GM12878 (cell line): ENCODE measurements at regions of chr11 and their contacts with region 1.

Region 1: GRCh38 chr11:67409261-67409666 is 5.4 kb downstream of the TBC1D10C start:
- DNase-seq: no peak
- ATAC-seq: peak; percentile 77
- H3K4me3 ChIP-seq: peak overlapping the region; percentile 48; the same call in 1 of the 2 replicates
- H3K27ac ChIP-seq: peak overlapping the region; percentile 84
- H3K4me1 ChIP-seq: peaks cover 61% of the 10 kb centered on the region
- H3K27me3 ChIP-seq: no peaks in the 10 kb centered on the region
- CTCF ChIP-seq: no peak
- EP300 ChIP-seq: no peak; a peak in 1 of 4 replicates
- POLR2A ChIP-seq: peak; percentile 83
- RAD21 ChIP-seq: no peak

Region 2: GRCh38 chr11:67337257-67337656 is 72.0 kb before region 1 on chr11:
- CTCF ChIA-PET with region 1: no interaction called
- POLR2A ChIA-PET with region 1: no interaction called
- RAD21 ChIA-PET with region 1: no interaction called
- SMC1A ChIA-PET with region 1: no interaction called
- in situ Hi-C with region 1: no loop called
- intact Hi-C with region 1: no loop called
- DNase-seq: no peak
- ATAC-seq: no peak
- H3K4me3 ChIP-seq: no peak overlapping the region
- H3K27ac ChIP-seq: no peak overlapping the region
- H3K4me1 ChIP-seq: no peaks in the 10 kb centered on the region
- H3K27me3 ChIP-seq: no peaks in the 10 kb centered on the region
- CTCF ChIP-seq: no peak
- EP300 ChIP-seq: no peak
- POLR2A ChIP-seq: no peak
- RAD21 ChIP-seq: no peak

Region 3: GRCh38 chr11:67420646-67421420 is 11.6 kb after region 1 on chr11:
- CTCF ChIA-PET with region 1: interaction called, 6 read pairs
- POLR2A ChIA-PET with region 1: interaction called, 13 read pairs
- RAD21 ChIA-PET with region 1: interaction called, 3 read pairs
- SMC1A ChIA-PET with region 1: interaction called, 7 read pairs
- in situ Hi-C with region 1: no loop called
- intact Hi-C with region 1: no loop called
- DNase-seq: no peak
- ATAC-seq: peak; percentile 94
- H3K4me3 ChIP-seq: peak overlapping the region; percentile 71
- H3K27ac ChIP-seq: no peak overlapping the region; the same call in 1 of the 2 replicates
- H3K4me1 ChIP-seq: peaks cover 2% of the 10 kb centered on the region; the same call in 1 of the 2 replicates
- H3K27me3 ChIP-seq: peaks cover 0 to 3% of the 10 kb centered on the region in 2 experiments; a peak in 2 of 4 replicates
- CTCF ChIP-seq: no peak
- EP300 ChIP-seq: no peak
- POLR2A ChIP-seq: peak; percentile 77
- RAD21 ChIP-seq: no peak

Region 4: DNA sequence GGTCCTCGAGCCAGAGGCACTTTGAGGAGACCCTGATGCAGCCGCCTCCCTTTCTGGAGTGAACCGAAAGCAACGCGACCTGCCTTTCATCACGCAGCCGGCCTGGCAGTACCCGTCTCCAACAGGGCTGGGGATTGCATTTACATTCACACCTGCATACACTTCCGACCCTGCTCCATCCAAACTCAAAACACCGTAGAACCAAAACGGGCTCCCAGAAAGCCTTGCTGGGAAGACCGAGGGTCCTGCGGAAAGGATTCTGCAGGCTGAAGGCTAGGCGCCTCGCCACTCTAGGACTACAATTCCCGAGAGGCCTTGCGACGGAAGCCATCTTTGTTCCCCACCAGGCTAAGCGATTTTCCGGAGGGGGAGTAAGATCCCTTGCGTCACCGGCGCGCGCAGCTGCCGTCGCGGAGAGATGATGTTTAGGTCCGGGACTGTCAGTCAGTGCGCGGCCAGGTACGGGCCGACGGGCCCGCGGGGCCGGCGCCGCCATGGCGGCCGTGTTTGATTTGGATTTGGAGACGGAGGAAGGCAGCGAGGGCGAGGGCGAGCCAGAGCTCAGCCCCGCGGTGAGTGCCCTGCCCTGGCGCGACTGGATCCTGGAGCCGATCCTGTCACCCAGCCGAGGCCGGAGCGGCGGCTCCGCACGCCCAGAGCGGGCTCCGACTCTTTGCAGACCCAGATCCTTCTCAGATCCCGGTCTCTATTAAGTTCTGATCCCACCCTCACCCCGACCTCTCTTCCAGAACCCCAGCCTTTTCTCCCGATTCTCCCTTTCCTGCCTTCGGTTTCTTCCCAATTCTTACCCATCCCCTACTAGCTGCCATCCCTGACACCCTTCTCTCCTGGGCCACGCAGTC is 19.0 kb after region 1 on chr11 and contains the start of gene RPS6KB2:
- CTCF ChIA-PET with region 1: interaction called, 6 read pairs
- POLR2A ChIA-PET with region 1: interaction called, 28 read pairs
- RAD21 ChIA-PET with region 1: interaction called, 112 read pairs
- SMC1A ChIA-PET with region 1: interaction called, 6 read pairs
- in situ Hi-C with region 1: no loop called
- intact Hi-C with region 1: no loop called
- DNase-seq: peak; percentile 95
- ATAC-seq: peak; percentile 85
- H3K4me3 ChIP-seq: peak within 1 kb of the TSS; percentile 100
- H3K27ac ChIP-seq: peak within 1 kb of the TSS; percentile 69
- H3K4me1 ChIP-seq: no peaks in the 10 kb centered on the region; the same call in 1 of the 2 replicates
- H3K27me3 ChIP-seq: no peaks in the 10 kb centered on the region
- CTCF ChIP-seq: no peak
- EP300 ChIP-seq: no peak
- POLR2A ChIP-seq: peak; percentile 87
- RAD21 ChIP-seq: no peak
- polyA plus RNA-seq, gene RPS6KB2: 0.39 to 2.3 TPM

Region 5: DNA sequence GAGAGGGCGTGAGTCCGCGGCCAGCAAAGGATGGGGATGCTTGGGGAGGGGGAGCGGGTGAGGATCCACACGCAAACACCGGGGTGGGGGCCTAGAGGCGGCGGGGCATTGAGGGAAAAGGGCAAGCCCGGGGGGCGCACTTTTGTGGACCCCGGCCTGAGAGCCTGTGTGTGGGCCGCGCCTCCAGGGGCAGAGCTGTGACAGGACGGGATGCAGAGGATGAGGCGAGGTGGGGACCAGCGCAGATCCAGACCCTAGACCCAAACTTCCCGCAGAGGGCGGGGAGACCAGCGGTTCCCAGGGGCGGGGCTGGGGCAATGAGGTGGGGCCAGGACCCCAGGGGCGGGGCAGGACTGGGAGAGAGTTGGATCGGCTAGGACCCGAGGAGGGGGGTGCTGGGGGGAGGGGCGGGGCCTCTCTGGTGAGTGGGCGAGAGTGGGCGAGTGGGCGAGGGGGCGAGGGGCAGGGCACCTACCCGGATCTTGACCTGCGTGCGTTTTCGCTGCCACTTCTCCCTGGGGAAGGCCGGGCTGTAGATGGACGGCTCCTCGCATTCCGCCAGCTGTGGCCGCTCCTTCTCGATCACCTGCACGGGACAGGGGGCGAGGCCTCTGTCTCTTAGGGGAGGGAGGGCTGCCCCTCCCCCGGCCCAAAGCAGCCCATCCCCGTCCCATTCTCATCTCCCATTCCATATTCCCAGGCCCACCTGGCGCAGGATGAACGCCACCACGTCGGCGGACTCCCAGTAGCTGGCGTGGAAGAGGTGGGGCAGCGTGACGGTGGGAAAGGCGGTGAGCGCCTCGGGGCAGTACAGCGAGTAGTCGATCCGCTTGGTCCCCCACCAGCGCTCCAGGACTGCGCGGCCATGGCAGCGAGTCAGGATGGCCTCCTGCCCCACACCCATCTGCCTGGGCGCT is 85.4 kb after region 1 on chr11:
- CTCF ChIA-PET with region 1: no interaction called
- POLR2A ChIA-PET with region 1: no interaction called
- RAD21 ChIA-PET with region 1: no interaction called
- SMC1A ChIA-PET with region 1: no interaction called
- in situ Hi-C with region 1: no loop called
- intact Hi-C with region 1: no loop called
- DNase-seq: no peak
- ATAC-seq: no peak
- H3K4me3 ChIP-seq: no peak overlapping the region
- H3K27ac ChIP-seq: no peak overlapping the region
- H3K4me1 ChIP-seq: no peaks in the 10 kb centered on the region
- H3K27me3 ChIP-seq: no peaks in the 10 kb centered on the region
- CTCF ChIP-seq: no peak
- EP300 ChIP-seq: no peak
- POLR2A ChIP-seq: 0 out of 2 replicates have a peak, but pooled peaks have one; percentile 8
- RAD21 ChIP-seq: no peak